ENCODE measurements at regions of chr11 and their contacts with region 1.

Region 1: GRCh38 chr11:92886243-92886905 is 83.1 kb upstream of the MTNR1B start:
- DNase-seq: peak; percentile 82

Region 2: DNA sequence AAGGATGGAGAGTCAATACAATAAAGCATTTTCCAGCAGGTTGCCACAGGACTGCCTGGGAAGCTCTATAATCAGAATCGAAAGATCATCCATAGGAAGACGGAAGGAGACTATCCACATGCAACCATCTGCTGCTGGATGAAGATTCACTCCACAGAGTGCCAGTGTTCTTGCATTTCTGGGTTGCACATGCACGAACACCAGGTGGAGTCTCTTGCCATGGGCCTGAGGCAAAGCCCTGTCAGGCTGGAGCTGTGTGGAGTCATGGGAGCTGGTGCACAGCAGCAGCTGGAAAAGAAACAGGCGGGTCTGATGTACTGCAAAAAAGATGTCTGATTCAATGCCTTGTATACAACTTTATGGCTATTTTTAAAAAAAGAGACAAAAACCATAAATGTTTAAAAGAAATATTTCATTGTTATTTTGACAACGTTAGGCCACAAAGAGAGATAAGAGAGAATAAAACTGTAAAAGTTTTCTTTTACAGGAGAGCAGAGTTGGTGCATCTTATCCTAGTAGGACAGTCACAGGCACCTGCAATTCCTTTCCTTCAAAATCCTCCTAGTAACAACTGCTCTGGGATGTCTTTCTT is 674.7 kb before region 1 on chr11:
- CTCF ChIA-PET with region 1: interaction called, 11 read pairs
- POLR2A ChIA-PET with region 1: no interaction called
- DNase-seq: peak; percentile 55

Region 3: DNA sequence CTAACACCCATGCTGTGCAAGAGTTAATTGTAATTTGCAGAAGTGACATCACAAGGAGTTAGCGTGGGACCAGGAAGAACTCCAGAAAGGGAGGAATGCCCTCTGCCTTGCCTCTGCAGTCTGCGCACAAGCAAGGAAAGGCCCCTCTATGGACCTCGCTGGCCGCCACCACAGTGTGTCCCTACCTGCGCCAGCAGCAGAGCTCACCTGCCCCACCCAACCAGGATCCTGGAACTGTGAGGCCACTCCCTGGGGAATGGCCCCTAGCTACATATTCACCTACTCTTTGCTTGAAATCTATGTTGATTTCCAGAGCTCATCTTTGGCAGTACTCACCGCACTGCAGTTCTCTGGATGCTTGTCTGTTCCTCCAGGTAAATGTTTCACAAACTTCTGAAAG is 11.1 kb after region 1 on chr11:
- CTCF ChIA-PET with region 1: no interaction called
- POLR2A ChIA-PET with region 1: no interaction called
- DNase-seq: no peak

Region 4: DNA sequence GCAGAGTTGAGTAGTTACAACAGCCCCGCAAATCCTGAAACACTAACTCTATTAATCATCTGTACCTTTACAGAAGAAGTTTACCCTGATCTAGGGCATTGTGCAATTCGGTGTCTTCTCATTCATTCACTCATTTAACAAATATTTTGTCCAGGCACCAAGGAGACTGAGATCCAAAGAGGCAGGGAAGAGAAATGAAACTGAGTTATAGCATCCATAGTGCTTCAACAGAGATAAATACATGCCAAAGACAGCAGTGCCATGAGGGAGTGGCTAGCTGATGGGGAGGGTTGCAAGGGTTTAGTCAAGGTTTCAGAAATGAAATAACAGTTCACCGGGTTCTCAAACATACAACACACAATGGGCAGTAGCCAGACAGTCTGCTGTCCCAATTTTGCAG is 42.9 kb after region 1 on chr11:
- CTCF ChIA-PET with region 1: no interaction called
- POLR2A ChIA-PET with region 1: no interaction called
- DNase-seq: no peak

Measured in HEK293T (cell line).